Activated CD4-positive, alpha-beta T cell treated with anti-CD3 and anti-CD28 coated beads for 36 hours (primary cell): ENCODE measurements at regions of chr4 and their contacts with region 1.

Region 1: DNA sequence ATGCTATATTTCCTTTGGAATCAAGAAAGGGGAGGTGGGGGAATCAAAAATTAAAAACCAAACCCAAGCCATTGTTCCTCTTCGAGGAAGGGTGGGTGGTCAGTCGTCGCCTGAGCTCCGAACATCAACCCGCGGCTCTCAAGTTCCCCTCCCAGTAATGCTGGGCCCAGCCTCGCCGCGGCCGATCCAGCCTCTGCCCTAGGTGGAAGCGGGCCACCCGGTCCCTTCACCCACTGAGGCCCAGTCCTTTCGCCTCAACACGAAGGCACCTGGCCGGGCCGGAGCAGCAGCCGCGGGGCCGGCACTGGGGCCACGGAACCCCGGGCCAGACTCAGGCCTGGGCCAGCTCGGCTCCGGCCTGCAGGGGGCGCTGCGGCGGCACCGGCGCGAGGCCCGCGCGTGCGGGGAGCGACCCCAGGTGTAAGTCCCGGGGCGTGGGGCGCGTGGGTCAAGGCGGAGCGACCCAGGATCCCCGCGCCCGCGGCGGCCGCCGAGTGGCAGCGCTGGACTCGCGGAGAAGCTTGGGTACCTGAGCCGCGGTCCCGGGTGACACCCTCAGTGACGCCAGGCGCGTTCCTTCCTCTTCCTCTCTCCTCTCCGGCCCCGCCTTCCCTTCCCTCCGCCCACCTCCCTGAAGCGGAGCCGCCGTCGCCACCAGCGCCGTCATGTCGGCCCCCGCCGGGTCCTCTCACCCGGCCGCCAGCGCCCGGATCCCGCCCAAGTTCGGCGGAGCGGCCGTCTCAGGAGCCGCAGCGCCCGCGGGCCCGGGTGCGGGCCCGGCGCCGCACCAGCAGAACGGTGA is at the start of gene SEC24B:
- DNase-seq: peak; percentile 94
- ATAC-seq: peak; percentile 82
- H3K4me3 Mint-ChIP-seq: peak within 1 kb of the TSS; percentile 83
- H3K27ac Mint-ChIP-seq: peak within 1 kb of the TSS; percentile 93
- H3K4me1 Mint-ChIP-seq: peaks cover 61% of the 10 kb centered on the region
- H3K27me3 Mint-ChIP-seq: no peaks in the 10 kb centered on the region
- total RNA-seq, gene SEC24B: 24.6 to 35.9 TPM

Region 2: GRCh38 chr4:109472343-109472761 is 38.9 kb after region 1 on chr4:
- CTCF ChIA-PET with region 1: interaction called, 5 read pairs
- POLR2A ChIA-PET with region 1: no interaction called
- intact Hi-C with region 1: loop called in 1 of 2 experiments (anchors 5 kb)
- DNase-seq: no peak
- ATAC-seq: peak; percentile 85
- H3K4me3 Mint-ChIP-seq: no peak overlapping the region
- H3K27ac Mint-ChIP-seq: peak overlapping the region; percentile 17
- H3K4me1 Mint-ChIP-seq: peaks cover 50% of the 10 kb centered on the region
- H3K27me3 Mint-ChIP-seq: no peaks in the 10 kb centered on the region

Region 3: DNA sequence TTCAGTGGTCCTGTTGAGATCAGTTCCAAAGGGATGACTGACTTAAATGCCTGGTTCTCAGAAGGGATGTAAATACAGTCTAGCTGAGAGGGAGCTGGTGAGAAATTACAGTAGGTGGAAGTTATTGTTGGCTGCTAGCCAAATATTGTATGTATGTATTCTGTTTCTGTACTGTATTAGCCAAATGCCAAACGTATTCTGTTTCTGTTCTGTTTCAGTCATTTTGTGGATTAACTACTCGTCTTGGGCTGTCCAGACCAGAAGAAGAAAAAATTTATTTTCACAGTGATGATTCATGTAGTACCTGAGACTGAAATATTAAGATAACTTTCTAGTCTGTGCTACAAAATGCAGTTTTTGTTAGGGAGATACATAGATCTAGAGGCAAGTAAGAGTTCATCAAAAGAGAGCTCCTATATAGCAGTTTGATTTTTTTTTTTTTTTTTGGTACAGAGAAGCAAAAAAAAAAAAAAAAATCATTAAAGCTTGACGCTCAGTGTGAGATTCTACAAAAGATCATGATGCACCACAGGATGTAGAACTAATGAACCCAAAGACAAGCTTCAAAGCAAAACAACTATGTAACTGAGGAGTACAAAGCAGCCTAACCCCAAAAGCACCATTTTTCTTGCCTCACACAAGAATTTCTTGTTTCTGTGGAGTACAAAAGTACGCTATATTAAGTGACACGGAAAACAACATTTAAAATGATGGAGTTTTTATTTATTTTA is 215.0 kb after region 1 on chr4:
- CTCF ChIA-PET with region 1: no interaction called
- POLR2A ChIA-PET with region 1: no interaction called
- intact Hi-C with region 1: loop called in 1 of 2 experiments (anchors 5 kb)
- DNase-seq: no peak
- ATAC-seq: peak; percentile 34
- H3K4me3 Mint-ChIP-seq: peak overlapping the region; percentile 47
- H3K27ac Mint-ChIP-seq: peak overlapping the region; percentile 88
- H3K4me1 Mint-ChIP-seq: peaks cover 45% of the 10 kb centered on the region
- H3K27me3 Mint-ChIP-seq: no peaks in the 10 kb centered on the region

Region 4: GRCh38 chr4:109702950-109703663 is 269.7 kb after region 1 on chr4 and contains the start of gene CASP6:
- CTCF ChIA-PET with region 1: interaction called, 4 read pairs
- POLR2A ChIA-PET with region 1: no interaction called
- intact Hi-C with region 1: loop called (anchors 1 to 5 kb)
- DNase-seq: peak; percentile 86
- ATAC-seq: peak; percentile 83
- H3K4me3 Mint-ChIP-seq: peak within 1 kb of the TSS; percentile 89
- H3K27ac Mint-ChIP-seq: peak within 1 kb of the TSS; percentile 78
- H3K4me1 Mint-ChIP-seq: peaks cover 35% of the 10 kb centered on the region
- H3K27me3 Mint-ChIP-seq: no peaks in the 10 kb centered on the region
- total RNA-seq, gene CASP6: 23.3 to 26.5 TPM

Region 5: DNA sequence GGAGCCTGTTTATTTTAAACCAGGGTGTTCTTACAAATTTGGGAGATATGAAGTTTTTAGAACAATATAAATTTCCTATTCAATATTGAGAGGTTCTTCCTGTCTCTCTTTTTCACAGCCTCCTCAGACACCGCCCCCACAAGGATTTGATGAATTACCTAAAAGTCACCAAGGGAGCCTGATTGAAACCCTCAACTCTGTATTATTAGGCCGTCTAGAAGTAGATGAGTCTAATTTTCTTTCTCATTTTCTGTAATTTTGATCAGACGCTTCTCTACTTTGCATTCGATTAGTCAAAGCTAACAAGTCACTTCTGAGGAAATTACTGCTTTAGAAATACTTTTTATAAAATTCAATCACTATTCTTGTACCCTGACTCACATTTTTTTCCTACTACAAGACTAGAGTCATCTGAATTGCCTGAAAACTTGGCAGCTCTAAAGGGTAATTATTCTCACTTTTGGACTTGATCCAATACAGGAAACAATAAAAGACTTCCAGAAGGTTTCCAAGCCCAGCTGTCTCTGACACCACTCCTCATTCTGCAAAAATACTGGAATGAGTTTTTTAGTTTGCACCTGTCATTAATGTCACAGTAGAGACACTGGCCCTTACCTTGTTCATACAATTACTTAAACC is 653.8 kb after region 1 on chr4:
- CTCF ChIA-PET with region 1: no interaction called
- POLR2A ChIA-PET with region 1: no interaction called
- intact Hi-C with region 1: loop called in 1 of 2 experiments (anchors 5 kb)
- DNase-seq: peak; percentile 12
- ATAC-seq: peak; percentile 40
- H3K4me3 Mint-ChIP-seq: no peak overlapping the region
- H3K27ac Mint-ChIP-seq: peak overlapping the region; percentile 96
- H3K4me1 Mint-ChIP-seq: peaks cover 68% of the 10 kb centered on the region
- H3K27me3 Mint-ChIP-seq: no peaks in the 10 kb centered on the region